ENCODE measurements at regions of chr11 and their contacts with region 1.

Region 1: DNA sequence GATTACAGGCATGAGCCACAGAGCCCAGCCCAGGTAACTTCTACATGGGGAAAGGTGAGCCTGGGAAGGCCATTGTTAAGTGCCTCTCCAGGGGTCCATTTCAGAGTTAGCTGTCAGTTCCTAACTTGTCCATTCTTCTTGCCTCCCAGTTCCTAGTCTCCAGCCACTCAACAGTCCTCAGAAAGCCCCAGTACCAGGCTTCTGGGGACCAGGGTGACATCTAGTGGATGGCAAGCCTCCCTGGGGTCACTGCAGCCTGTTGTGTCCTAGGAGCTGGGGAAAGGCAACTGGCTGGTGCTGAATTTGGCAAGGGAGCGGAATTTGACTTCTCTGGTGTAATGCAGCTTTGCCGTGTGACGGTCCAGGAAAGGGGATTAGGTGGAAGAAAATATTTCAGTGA is 2.1 kb downstream of the LGALS12 start:
- DNase-seq: peak; percentile 68
- ATAC-seq: peak; percentile 77
- H3K4me3 Mint-ChIP-seq: no peak overlapping the region
- H3K27ac Mint-ChIP-seq: no peak overlapping the region
- H3K4me1 Mint-ChIP-seq: peaks cover 63% of the 10 kb centered on the region
- H3K27me3 Mint-ChIP-seq: peaks cover 6% of the 10 kb centered on the region; the same call in 1 of the 2 replicates
- CTCF ChIP-seq: no peak

Region 2: GRCh38 chr11:63490551-63491239 is 17.3 kb before region 1 on chr11 and contains the start of gene PLAAT5:
- CTCF ChIA-PET with region 1: interaction called, 37 read pairs
- POLR2A ChIA-PET with region 1: interaction called, 4 read pairs
- DNase-seq: peak; percentile 56
- ATAC-seq: peak; percentile 63
- H3K4me3 Mint-ChIP-seq: peak within 1 kb of the TSS; percentile 77
- H3K27ac Mint-ChIP-seq: peak within 1 kb of the TSS; percentile 90
- H3K4me1 Mint-ChIP-seq: peaks cover 40% of the 10 kb centered on the region
- H3K27me3 Mint-ChIP-seq: peaks cover 18% of the 10 kb centered on the region
- CTCF ChIP-seq: no peak
- total RNA-seq, gene PLAAT5: 14.7 to 23.0 TPM (median 16.0 TPM) in 3 replicates

Region 3: GRCh38 chr11:63635762-63636465 is 127.9 kb after region 1 on chr11:
- CTCF ChIA-PET with region 1: interaction called, 11 read pairs
- POLR2A ChIA-PET with region 1: no interaction called
- DNase-seq: peak; percentile 82
- ATAC-seq: peak; percentile 96
- H3K4me3 Mint-ChIP-seq: no peak overlapping the region
- H3K27ac Mint-ChIP-seq: peak overlapping the region; percentile 2; the same call in 1 of the 2 replicates
- H3K4me1 Mint-ChIP-seq: peaks cover 4% of the 10 kb centered on the region
- H3K27me3 Mint-ChIP-seq: no peaks in the 10 kb centered on the region
- CTCF ChIP-seq: peak; percentile 69

Region 4: DNA sequence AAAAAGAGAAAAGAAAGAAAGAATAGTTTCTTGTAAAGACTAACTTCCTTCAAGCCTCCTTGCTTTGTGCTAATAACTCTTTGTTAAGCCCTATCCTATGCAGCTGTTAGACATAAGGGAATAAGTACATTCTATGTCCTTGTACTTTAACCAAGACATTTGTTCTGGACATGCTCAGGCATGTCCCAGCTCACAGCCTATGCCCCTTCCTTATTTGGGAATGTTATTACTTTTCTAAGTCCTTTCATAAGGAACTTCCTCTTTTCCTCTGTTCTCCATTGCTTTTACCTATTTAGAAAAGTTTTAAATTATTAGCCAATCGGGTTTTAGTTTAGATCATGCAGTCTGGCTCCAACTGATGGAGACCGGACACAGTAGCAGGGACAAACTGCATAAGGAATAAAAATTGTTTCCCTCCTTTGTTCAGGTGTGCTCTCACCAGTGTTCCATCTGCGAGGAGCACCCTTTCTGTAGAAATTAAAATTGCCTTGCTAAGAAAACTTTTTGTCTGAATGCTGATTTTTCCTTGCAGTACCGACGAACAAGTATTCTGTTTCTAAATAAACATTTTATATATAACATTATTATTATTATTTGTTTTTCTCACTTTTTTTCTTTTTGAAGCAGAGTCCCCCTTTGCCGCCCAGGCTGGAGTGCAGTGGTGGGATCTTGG is 283.6 kb after region 1 on chr11:
- CTCF ChIA-PET with region 1: no interaction called
- POLR2A ChIA-PET with region 1: no interaction called
- DNase-seq: no peak
- ATAC-seq: no peak
- H3K4me3 Mint-ChIP-seq: no peak overlapping the region
- H3K27ac Mint-ChIP-seq: no peak overlapping the region
- H3K4me1 Mint-ChIP-seq: no peaks in the 10 kb centered on the region
- H3K27me3 Mint-ChIP-seq: peaks cover 18% of the 10 kb centered on the region
- CTCF ChIP-seq: no peak

Region 5: DNA sequence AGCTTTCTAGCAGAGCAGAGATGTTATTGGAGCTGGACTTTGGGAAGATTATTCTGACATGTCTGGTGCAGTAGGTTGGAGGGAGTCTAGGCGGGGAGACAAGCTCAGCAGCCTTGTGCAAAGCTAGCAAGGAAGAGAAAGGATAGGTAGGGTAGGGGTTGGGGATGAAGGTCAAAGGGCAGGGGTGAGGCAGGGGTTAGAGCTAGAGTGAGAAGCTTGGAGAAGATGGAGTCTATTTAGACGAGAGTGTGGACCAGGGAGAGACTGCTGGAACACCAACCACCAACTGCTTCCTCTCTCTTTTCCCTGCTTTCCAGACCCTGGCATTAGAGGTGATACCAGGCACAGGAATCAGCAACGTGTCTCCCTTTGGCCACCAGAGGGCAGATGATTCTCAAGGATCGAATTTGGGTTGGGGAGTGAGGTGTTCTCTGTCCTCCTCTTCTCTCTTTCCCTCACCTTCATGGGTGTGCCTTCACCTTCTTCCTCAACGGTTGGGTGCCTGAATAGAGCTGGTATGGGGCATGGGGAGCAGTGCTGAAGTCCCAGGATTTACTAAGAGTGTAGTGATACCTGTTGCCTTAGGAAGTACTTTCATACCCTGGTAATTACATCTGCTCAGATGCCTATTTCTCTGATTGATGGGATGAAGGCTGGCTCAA is 329.1 kb after region 1 on chr11:
- CTCF ChIA-PET with region 1: no interaction called
- POLR2A ChIA-PET with region 1: no interaction called
- DNase-seq: peak; percentile 85
- ATAC-seq: peak; percentile 9
- H3K4me3 Mint-ChIP-seq: peak overlapping the region; percentile 27; the same call in 1 of the 2 replicates
- H3K27ac Mint-ChIP-seq: peak overlapping the region; percentile 85
- H3K4me1 Mint-ChIP-seq: peaks cover 49% of the 10 kb centered on the region
- H3K27me3 Mint-ChIP-seq: no peaks in the 10 kb centered on the region; the same call in 1 of the 2 replicates
- CTCF ChIP-seq: peak; percentile 62; the same call in 1 of the 2 replicates

Measured in WTC11 (cell line).